ENCODE measurements at regions of chr2 and their contacts with region 1.

Region 1: DNA sequence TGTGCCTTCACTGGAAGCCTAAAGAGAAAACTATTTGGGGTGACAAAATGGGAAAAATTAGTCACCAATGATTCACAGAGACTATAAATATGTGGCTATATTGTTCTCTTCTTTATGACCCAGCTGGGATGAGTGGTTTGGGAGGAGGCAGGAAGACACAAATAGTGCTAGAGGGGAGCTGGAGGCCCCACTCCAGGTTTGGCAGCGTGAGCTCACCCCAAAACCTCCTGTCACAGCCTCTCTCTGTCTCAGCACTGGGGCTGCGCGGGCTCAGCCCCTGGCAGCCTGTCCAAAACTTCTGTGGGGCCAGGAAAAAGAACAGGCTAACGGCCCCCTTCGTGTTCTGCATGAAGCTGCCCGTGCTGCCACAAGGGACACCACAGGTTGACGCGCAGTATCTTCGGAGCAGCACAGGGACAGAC is 73.2 kb upstream of the LCLAT1 start:
- DNase-seq: no peak
- H3K4me3 Mint-ChIP-seq: no peak overlapping the region
- H3K27ac Mint-ChIP-seq: no peak overlapping the region
- H3K4me1 Mint-ChIP-seq: peaks cover 21% of the 10 kb centered on the region
- H3K27me3 Mint-ChIP-seq: no peaks in the 10 kb centered on the region

Region 2: GRCh38 chr2:30410217-30410616 is 36.3 kb after region 1 on chr2:
- intact Hi-C with region 1: loop called (anchors 5 kb)
- DNase-seq: no peak
- H3K4me3 Mint-ChIP-seq: no peak overlapping the region
- H3K27ac Mint-ChIP-seq: peak overlapping the region; percentile 48
- H3K4me1 Mint-ChIP-seq: peaks cover 28% of the 10 kb centered on the region
- H3K27me3 Mint-ChIP-seq: no peaks in the 10 kb centered on the region

Region 3: GRCh38 chr2:30421604-30422443 is 47.9 kb after region 1 on chr2:
- intact Hi-C with region 1: no loop called
- DNase-seq: no peak
- H3K4me3 Mint-ChIP-seq: peak overlapping the region; percentile 63
- H3K27ac Mint-ChIP-seq: peak overlapping the region; percentile 86
- H3K4me1 Mint-ChIP-seq: peaks cover 29% of the 10 kb centered on the region
- H3K27me3 Mint-ChIP-seq: no peaks in the 10 kb centered on the region

Measured in activated T-helper 2 cell treated with anti-CD3 and anti-CD28 coated beads, Interferon-gamma antibody, Interleukin-2, Interleukin-4, amounts not matched to agents 10 μg/mL and 5 μg/mL and 100 μg/mL, durations not matched to agents 14 hours and 24 hours and 36 hours (primary cell).